Activated CD4-positive, alpha-beta T cell treated with anti-CD3 and anti-CD28 coated beads for 36 hours (primary cell): ENCODE measurements at regions of chr19 and their contacts with region 1.

Region 1: DNA sequence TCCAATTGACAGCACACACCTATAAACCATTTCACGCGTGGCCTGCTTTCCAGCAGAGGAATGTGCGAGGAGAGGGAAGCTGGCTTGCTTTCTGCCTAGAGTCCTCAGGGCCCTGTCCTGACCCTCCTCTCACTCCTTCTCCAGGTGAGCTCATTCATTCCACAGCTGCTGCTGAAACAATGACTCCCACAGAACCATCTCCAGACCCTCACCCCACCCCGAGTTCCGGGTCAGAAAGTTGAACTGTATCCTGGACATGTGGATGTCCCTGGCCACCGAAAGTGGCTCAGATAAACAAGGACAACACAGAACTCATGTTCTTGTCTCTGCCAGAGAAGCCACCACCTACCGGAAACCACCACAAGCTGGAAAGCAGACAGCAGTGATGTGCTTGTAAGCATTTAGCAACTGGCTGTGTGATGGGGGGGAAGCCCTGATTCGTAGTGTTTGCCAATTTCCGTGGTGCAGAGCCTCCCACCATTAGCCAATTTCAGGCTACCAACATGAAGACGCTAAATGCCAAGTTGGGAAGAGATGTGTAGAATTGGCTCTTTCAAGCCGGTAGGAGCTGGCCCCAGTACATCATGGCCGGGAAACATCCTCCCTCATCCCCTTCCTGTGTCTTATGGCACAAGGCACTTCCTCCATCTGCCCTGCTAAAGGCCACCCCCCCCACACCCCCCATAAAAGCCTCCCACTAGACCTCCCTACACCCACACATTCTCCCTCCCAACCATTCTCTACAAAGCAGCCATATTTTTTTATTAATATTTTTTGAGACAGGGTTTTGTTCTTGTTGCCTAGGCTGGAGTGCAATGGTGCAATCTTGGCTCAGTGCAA is 5.0 kb downstream of the SYCE2 start:
- DNase-seq: peak; percentile 70
- ATAC-seq: peak; percentile 81
- H3K4me3 Mint-ChIP-seq: peak overlapping the region; percentile 36
- H3K27ac Mint-ChIP-seq: peak overlapping the region; percentile 94
- H3K4me1 Mint-ChIP-seq: peaks cover 26% of the 10 kb centered on the region
- H3K27me3 Mint-ChIP-seq: no peaks in the 10 kb centered on the region

Region 2: GRCh38 chr19:12806239-12807081 is 107.6 kb before region 1 on chr19 and contains the start of gene RNASEH2A:
- CTCF ChIA-PET with region 1: no interaction called
- POLR2A ChIA-PET with region 1: no interaction called
- intact Hi-C with region 1: loop called in 1 of 2 experiments (anchors 1 kb)
- DNase-seq: peak; percentile 94
- ATAC-seq: peak; percentile 93
- H3K4me3 Mint-ChIP-seq: peak within 1 kb of the TSS; percentile 89
- H3K27ac Mint-ChIP-seq: peak within 1 kb of the TSS; percentile 80
- H3K4me1 Mint-ChIP-seq: peaks cover 24% of the 10 kb centered on the region
- H3K27me3 Mint-ChIP-seq: no peaks in the 10 kb centered on the region
- total RNA-seq, gene RNASEH2A: 27.0 to 51.1 TPM

Region 3: DNA sequence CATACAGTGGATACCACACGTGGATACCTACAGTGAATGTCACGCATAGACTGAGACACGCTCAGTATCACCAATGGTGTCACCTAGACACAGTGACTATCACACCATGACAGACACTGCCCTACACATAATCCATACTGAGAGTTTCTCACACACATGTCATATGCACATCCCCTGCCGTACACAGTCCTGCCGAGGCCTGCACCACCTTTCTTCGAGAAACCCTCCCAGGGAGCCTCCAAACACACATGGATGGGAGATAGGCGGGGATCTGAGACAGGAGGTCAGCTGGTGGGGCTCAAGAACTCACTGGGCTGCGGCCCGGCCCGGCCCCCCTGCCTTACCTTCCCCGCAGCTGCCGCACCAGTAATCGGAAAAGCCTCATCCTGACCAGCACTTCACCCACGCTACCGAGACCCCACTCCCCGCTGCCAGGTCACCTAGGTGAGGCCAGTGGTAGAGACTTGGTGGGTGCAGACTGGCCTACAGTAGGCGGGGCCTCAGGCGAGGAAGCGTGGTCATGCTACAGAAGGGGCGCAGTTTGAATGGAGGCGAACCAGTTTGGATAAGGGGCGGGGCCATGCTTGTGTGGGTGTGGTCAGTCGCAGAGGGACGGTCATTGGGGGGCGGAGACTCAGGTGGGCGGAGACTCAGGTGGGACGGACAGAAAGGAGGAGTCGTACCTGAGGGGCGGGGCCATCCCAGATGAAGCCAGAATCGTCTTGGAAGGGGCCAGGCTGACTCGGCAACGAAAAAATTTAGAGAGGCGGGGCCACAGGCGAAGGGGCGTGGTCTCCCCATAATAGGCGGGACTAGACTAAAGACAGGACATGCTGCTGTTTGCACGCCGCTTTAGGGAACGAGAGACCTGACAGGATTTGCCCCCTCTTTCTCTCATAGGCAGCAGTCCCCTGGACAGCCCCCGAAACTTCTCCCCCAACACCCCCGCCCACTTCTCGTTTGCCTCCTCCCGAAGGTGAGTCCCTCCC is 73.7 kb before region 1 on chr19:
- CTCF ChIA-PET with region 1: no interaction called
- POLR2A ChIA-PET with region 1: no interaction called
- intact Hi-C with region 1: no loop called
- DNase-seq: peak; percentile 84
- ATAC-seq: peak; percentile 53
- H3K4me3 Mint-ChIP-seq: peak overlapping the region; percentile 17
- H3K27ac Mint-ChIP-seq: no peak overlapping the region
- H3K4me1 Mint-ChIP-seq: peaks cover 28% of the 10 kb centered on the region
- H3K27me3 Mint-ChIP-seq: peaks cover 67% of the 10 kb centered on the region

Region 4: GRCh38 chr19:12938234-12939025 is 24.4 kb after region 1 on chr19 and contains the start of gene CALR:
- CTCF ChIA-PET with region 1: interaction called, 4 read pairs
- POLR2A ChIA-PET with region 1: interaction called, 3 read pairs
- intact Hi-C with region 1: loop called (anchors 1 kb)
- DNase-seq: peak; percentile 99
- ATAC-seq: peak; percentile 89
- H3K4me3 Mint-ChIP-seq: peak within 1 kb of the TSS; percentile 99
- H3K27ac Mint-ChIP-seq: peak within 1 kb of the TSS; percentile 96
- H3K4me1 Mint-ChIP-seq: peaks cover 59% of the 10 kb centered on the region
- H3K27me3 Mint-ChIP-seq: no peaks in the 10 kb centered on the region
- total RNA-seq, gene CALR: 557 to 569 TPM

Region 5: GRCh38 chr19:12945479-12946091 is 31.5 kb after region 1 on chr19 and contains the start of gene RAD23A:
- CTCF ChIA-PET with region 1: no interaction called
- POLR2A ChIA-PET with region 1: no interaction called
- intact Hi-C with region 1: loop called in 1 of 2 experiments (anchors 1 kb)
- DNase-seq: peak; percentile 100
- ATAC-seq: peak; percentile 81
- H3K4me3 Mint-ChIP-seq: peak within 1 kb of the TSS; percentile 88
- H3K27ac Mint-ChIP-seq: peak within 1 kb of the TSS; percentile 97
- H3K4me1 Mint-ChIP-seq: peaks cover 55% of the 10 kb centered on the region
- H3K27me3 Mint-ChIP-seq: no peaks in the 10 kb centered on the region
- total RNA-seq, gene RAD23A: 189 to 265 TPM

Region 6: GRCh38 chr19:12956446-12957388 is 42.6 kb after region 1 on chr19 and contains the start of gene GADD45GIP1:
- CTCF ChIA-PET with region 1: interaction called, 4 read pairs
- POLR2A ChIA-PET with region 1: no interaction called
- intact Hi-C with region 1: loop called (anchors 1 to 2 kb)
- DNase-seq: peak; percentile 91
- ATAC-seq: peak; percentile 93
- H3K4me3 Mint-ChIP-seq: peak within 1 kb of the TSS; percentile 91
- H3K27ac Mint-ChIP-seq: peak within 1 kb of the TSS; percentile 97
- H3K4me1 Mint-ChIP-seq: peaks cover 32% of the 10 kb centered on the region
- H3K27me3 Mint-ChIP-seq: no peaks in the 10 kb centered on the region
- total RNA-seq, gene GADD45GIP1: 31.1 to 36.3 TPM